Posterior cingulate gyrus (tissue), 11 donors: ENCODE measurements at regions of chr22 and their contacts with region 1.

Region 1: GRCh38 chr22:29154364-29155048 is 51.2 kb upstream of the EMID1 start:
- DNase-seq: peak; percentile 61 to 97 (median 80)

Region 2: DNA sequence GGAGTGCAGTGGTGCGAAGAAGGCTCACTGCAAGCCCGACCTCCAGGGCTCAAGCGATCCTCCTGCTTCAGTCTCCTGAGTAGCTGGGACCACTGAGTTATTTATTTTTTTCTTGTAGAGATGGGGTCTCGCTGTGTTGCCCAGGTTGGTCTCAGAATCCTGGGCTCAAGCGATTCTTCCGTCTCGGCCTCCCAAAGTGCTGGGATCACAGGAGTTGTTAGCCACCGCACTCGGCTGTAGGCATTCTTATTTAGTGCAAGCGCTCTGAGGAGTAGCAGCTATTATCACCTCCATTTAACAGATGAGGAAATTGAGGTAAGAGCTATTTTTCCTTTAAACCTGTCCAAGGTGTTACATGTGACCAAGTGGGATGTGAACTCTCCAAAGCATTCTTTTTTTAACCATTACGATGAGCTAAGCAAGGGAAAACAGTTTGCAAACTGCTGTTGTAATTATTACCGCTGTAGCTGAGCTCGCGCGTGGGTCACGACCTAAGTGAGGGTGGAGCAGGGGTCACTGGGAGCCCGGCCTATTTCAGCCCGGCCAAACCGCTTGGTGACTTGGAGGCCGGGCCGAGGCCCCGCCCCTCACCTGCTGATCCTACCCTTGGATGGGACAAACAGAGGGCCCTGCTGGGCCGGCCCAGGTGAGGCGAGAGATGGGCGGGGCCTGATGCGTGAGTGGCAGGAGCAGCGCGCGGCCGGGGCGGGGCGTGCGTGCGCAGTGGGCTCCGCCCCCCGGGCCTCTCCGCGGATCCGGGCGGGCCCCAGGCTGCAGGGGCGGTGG is 82.1 kb before region 1 on chr22:
- intact Hi-C with region 1: loop called (anchors 5 kb)
- DNase-seq: peak; percentile 51 to 96 (median 76)

Region 3: GRCh38 chr22:29167032-29167911 is 12.8 kb after region 1 on chr22:
- intact Hi-C with region 1: no loop called
- DNase-seq: peak in 3 of 10 donors; percentile 26 to 63 (median 31)

Region 4: GRCh38 chr22:29244785-29245636 is 90.5 kb after region 1 on chr22:
- intact Hi-C with region 1: no loop called
- DNase-seq: no peak